Activated CD4-positive, alpha-beta T cell treated with anti-CD3 and anti-CD28 coated beads, Interleukin-2, amount 10 ng/mL, durations not matched to agents 24 days and 14 days (primary cell): ENCODE measurements at regions of chr7 and their contacts with region 1.

Region 1: DNA sequence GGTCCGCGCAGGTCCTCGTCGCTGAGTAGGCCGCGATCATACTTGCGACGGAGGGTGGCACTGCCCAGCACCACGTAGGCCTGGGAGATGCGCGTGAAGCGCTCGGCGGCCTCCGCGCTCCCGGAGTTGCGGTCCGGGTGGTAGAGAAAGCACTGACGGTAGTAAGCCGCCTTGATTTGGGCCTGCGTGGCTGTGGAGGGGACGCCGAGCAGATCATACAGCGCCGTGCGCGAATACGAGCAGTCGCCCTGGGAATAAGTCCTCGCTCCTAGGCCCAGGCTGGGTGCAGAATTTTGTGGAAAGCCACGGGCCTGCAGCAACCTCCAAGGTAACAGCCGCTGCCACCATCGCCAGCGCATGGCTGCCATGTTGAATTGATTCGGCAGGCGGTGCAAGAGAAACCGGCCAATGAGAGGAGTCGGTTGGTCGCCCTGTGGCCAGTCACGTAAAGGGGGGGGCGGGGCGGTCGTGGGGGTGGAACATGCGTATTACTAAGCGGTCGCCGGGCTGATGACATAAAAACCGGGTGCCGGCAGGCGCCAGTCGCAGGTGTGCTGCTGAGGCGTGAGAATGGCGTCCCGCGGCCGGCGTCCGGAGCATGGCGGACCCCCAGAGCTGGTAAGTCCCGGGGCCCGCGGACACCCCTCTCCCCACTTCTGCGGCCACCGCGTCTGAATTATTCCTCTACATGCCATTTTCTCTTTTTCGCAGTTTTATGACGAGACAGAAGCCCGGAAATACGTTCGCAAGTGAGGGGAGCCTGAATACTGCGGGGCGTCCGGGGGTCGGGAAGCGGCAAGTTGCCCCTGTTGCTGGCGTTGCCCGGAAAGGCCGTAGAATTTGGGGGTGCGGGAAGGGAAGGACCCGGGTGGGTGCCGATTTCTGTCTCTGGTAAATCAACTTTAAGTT is at the starts of genes BUD23 and DNAJC30:
- DNase-seq: peak; percentile 97
- H3K4me3 Mint-ChIP-seq: peak within 1 kb of the TSS; percentile 96
- H3K27ac Mint-ChIP-seq: peak within 1 kb of the TSS; percentile 98
- H3K4me1 Mint-ChIP-seq: peaks cover 23% of the 10 kb centered on the region
- H3K27me3 Mint-ChIP-seq: no peaks in the 10 kb centered on the region
- total RNA-seq, gene BUD23: 133 TPM in 2 replicates
- total RNA-seq, gene DNAJC30: 9.4 and 10.9 TPM in 2 replicates

Region 2: GRCh38 chr7:73557108-73557396 is 126.3 kb before region 1 on chr7:
- intact Hi-C with region 1: loop called (anchors 1 kb)
- DNase-seq: peak; percentile 98
- H3K4me3 Mint-ChIP-seq: peak overlapping the region; percentile 89
- H3K27ac Mint-ChIP-seq: peak overlapping the region; percentile 95
- H3K4me1 Mint-ChIP-seq: peaks cover 32% of the 10 kb centered on the region
- H3K27me3 Mint-ChIP-seq: no peaks in the 10 kb centered on the region

Region 3: GRCh38 chr7:73578342-73579127 is 104.8 kb before region 1 on chr7 and contains the start of gene TBL2:
- intact Hi-C with region 1: loop called (anchors 1 kb)
- DNase-seq: peak; percentile 100
- H3K4me3 Mint-ChIP-seq: peak within 1 kb of the TSS; percentile 99
- H3K27ac Mint-ChIP-seq: peak within 1 kb of the TSS; percentile 97
- H3K4me1 Mint-ChIP-seq: peaks cover 28% of the 10 kb centered on the region
- H3K27me3 Mint-ChIP-seq: no peaks in the 10 kb centered on the region
- total RNA-seq, gene TBL2: 41.4 and 49.1 TPM in 2 replicates

Region 4: GRCh38 chr7:73667344-73668102 is 15.8 kb before region 1 on chr7 and contains the start of gene VPS37D:
- intact Hi-C with region 1: loop called (anchors 1 kb)
- DNase-seq: peak; percentile 98
- H3K4me3 Mint-ChIP-seq: peak within 1 kb of the TSS; percentile 81
- H3K27ac Mint-ChIP-seq: no peak within 1 kb of the TSS
- H3K4me1 Mint-ChIP-seq: peaks cover 13% of the 10 kb centered on the region
- H3K27me3 Mint-ChIP-seq: peaks cover 46% of the 10 kb centered on the region
- total RNA-seq, gene VPS37D: 0.40 and 0.47 TPM in 2 replicates

Region 5: DNA sequence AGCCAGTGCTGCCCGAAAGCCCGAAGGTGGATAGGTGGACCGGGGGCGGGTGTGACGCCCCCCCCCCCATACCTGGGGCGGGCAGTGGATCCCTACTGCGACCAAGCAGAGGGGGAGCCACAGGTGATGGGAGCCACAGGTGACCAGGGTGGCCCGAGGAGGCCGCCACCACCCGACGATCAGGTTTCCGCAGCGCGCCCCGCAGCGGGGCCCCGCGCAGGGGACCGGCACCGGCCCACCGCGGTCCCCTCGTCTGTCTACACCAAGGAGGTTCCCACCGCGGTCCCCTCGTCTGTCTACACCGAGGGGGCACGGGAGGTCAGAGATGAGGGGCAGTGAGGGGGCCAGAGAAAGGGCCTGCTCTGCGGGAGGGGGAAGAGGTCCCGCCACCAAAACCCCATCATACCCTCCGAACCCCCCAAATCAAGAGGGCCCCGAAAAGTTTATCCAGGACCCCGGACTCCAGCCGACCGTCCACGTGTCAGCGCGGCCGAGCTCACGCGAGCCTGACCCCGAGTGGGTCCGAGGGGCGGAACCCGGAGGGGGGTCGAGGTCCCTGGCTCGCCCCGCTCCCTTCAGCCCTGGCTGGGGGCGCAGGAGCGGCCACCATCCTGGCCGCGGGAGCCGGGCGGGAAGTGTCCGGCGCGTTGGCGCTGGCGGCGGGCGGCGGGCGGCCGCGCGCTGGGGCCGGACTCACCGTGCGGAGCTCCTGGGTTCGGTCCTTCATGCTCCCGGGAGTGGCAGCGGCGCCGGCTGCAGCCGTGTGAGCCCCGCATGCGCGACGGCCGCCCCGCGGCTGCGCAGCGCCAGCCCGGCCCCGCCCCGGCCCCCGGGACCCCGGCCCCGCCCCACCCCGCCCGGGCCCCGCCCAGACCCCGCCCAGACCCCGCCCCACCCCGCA is 35.8 kb after region 1 on chr7 and contains the start of gene STX1A:
- intact Hi-C with region 1: loop called (anchors 1 kb)
- DNase-seq: peak; percentile 93
- H3K4me3 Mint-ChIP-seq: peak within 1 kb of the TSS; percentile 92
- H3K27ac Mint-ChIP-seq: peak within 1 kb of the TSS; percentile 91
- H3K4me1 Mint-ChIP-seq: peaks cover 33% of the 10 kb centered on the region
- H3K27me3 Mint-ChIP-seq: peaks cover 19% of the 10 kb centered on the region
- total RNA-seq, gene STX1A: 19.0 and 19.4 TPM in 2 replicates

Region 6: GRCh38 chr7:73822319-73823076 is 139.2 kb after region 1 on chr7:
- intact Hi-C with region 1: no loop called
- DNase-seq: no peak
- H3K4me3 Mint-ChIP-seq: no peak overlapping the region
- H3K27ac Mint-ChIP-seq: no peak overlapping the region
- H3K4me1 Mint-ChIP-seq: peaks cover 6% of the 10 kb centered on the region
- H3K27me3 Mint-ChIP-seq: peaks cover 14% of the 10 kb centered on the region